Activated CD4-positive, alpha-beta memory T cell treated with anti-CD3 and anti-CD28 coated beads for 36 hours (primary cell): ENCODE measurements at regions of chr5 and their contacts with region 1.

Region 1: DNA sequence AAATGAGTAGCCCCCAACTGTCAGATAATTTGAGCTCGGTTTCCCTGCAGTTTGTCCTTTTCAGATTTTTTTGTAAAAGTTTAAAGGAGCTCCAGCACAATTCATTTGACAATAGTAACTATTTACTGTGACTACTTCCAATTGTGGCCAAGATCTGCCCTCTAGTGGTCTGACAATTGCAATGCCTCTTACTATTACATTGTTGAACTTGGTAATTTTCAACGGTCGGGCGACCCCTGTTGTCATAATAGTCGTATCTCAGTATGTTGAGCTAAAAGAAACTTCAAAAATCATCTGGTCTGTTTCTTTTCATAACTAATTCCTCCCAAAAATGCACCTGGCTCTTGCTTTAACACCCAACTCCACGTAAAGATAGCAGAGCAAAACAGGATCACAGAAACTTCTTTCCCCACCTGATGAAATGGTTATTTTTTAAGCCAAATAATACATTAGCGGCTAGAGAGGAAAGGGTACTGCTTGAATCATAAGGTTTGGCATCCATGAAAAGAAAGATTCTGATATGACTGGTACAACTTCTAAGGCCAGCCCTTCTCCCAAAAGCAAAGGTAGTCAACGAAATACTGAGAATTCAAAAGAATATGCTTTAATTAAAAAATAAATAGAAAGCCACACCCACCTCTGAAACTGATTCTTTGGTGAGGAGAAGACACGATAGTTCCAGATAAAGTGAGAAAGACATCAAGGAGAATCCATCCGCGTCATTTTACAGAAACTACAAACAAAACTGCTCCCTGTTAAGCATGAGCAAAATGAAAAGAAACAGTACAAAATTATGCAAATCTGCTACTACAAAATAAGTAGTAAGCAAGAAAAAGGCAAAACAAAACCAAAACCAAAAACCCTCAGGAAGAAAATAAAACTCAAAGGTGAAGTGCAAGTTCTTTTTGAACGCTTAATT is 76.9 kb upstream of the HTR4 start:
- DNase-seq: peak; percentile 73
- H3K4me3 Mint-ChIP-seq: peak overlapping the region; percentile 47
- H3K27ac Mint-ChIP-seq: no peak overlapping the region
- H3K4me1 Mint-ChIP-seq: peaks cover 12% of the 10 kb centered on the region
- H3K27me3 Mint-ChIP-seq: peaks cover 1% of the 10 kb centered on the region

Region 2: GRCh38 chr5:147782110-147783028 is 948.8 kb before region 1 on chr5 and contains the start of gene JAKMIP2:
- CTCF ChIA-PET with region 1: no interaction called
- POLR2A ChIA-PET with region 1: no interaction called
- intact Hi-C with region 1: no loop called
- DNase-seq: peak; percentile 69
- H3K4me3 Mint-ChIP-seq: peak within 1 kb of the TSS; percentile 70
- H3K27ac Mint-ChIP-seq: no peak within 1 kb of the TSS
- H3K4me1 Mint-ChIP-seq: peaks cover 2% of the 10 kb centered on the region
- H3K27me3 Mint-ChIP-seq: peaks cover 3% of the 10 kb centered on the region
- total RNA-seq, gene JAKMIP2: 0.99 to 1.1 TPM

Region 3: GRCh38 chr5:148042881-148043280 is 688.3 kb before region 1 on chr5:
- CTCF ChIA-PET with region 1: no interaction called
- POLR2A ChIA-PET with region 1: no interaction called
- intact Hi-C with region 1: no loop called
- DNase-seq: no peak
- H3K4me3 Mint-ChIP-seq: no peak overlapping the region
- H3K27ac Mint-ChIP-seq: no peak overlapping the region
- H3K4me1 Mint-ChIP-seq: no peaks in the 10 kb centered on the region
- H3K27me3 Mint-ChIP-seq: no peaks in the 10 kb centered on the region

Region 4: GRCh38 chr5:148186248-148186996 is 544.8 kb before region 1 on chr5:
- CTCF ChIA-PET with region 1: interaction called, 14 read pairs
- POLR2A ChIA-PET with region 1: no interaction called
- intact Hi-C with region 1: no loop called
- DNase-seq: no peak
- H3K4me3 Mint-ChIP-seq: no peak overlapping the region
- H3K27ac Mint-ChIP-seq: no peak overlapping the region
- H3K4me1 Mint-ChIP-seq: peaks cover 9% of the 10 kb centered on the region
- H3K27me3 Mint-ChIP-seq: peaks cover 8% of the 10 kb centered on the region

Region 5: GRCh38 chr5:148455185-148455584 is 276.0 kb before region 1 on chr5:
- CTCF ChIA-PET with region 1: interaction called, 17 read pairs
- POLR2A ChIA-PET with region 1: no interaction called
- intact Hi-C with region 1: no loop called
- DNase-seq: no peak
- H3K4me3 Mint-ChIP-seq: no peak overlapping the region
- H3K27ac Mint-ChIP-seq: no peak overlapping the region
- H3K4me1 Mint-ChIP-seq: no peaks in the 10 kb centered on the region
- H3K27me3 Mint-ChIP-seq: peaks cover 20% of the 10 kb centered on the region

Region 6: DNA sequence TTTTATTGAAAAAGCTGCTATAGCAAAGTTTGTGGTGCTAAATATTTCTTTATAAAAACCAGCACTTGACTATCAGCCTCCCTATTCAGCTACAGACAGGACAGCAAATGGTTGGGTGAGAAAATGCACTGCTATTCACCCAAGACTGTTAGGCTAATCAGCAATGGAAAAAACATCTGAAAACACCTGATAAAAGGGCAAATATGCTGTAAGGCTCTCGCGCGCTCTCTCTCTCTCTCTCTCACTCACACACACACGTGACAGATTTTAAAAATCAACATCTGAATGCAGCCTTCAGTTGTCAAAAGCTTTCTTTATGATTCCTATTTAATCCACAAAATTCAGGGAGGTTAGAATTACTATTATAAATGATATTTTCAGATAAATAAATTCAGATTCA is 157.0 kb before region 1 on chr5:
- CTCF ChIA-PET with region 1: no interaction called
- POLR2A ChIA-PET with region 1: no interaction called
- intact Hi-C with region 1: no loop called
- DNase-seq: no peak
- H3K4me3 Mint-ChIP-seq: no peak overlapping the region
- H3K27ac Mint-ChIP-seq: no peak overlapping the region
- H3K4me1 Mint-ChIP-seq: no peaks in the 10 kb centered on the region
- H3K27me3 Mint-ChIP-seq: peaks cover 3% of the 10 kb centered on the region

Region 7: GRCh38 chr5:148708854-148709253 is 22.3 kb before region 1 on chr5:
- CTCF ChIA-PET with region 1: interaction called, 27 read pairs
- POLR2A ChIA-PET with region 1: no interaction called
- intact Hi-C with region 1: no loop called
- DNase-seq: peak; percentile 48
- H3K4me3 Mint-ChIP-seq: no peak overlapping the region
- H3K27ac Mint-ChIP-seq: no peak overlapping the region
- H3K4me1 Mint-ChIP-seq: peaks cover 15% of the 10 kb centered on the region
- H3K27me3 Mint-ChIP-seq: peaks cover 25% of the 10 kb centered on the region

Region 8: GRCh38 chr5:148957591-148958202 is 226.5 kb after region 1 on chr5:
- CTCF ChIA-PET with region 1: interaction called, 310 read pairs
- POLR2A ChIA-PET with region 1: no interaction called
- intact Hi-C with region 1: loop called (anchors 1 kb)
- DNase-seq: peak; percentile 60
- H3K4me3 Mint-ChIP-seq: no peak overlapping the region
- H3K27ac Mint-ChIP-seq: no peak overlapping the region
- H3K4me1 Mint-ChIP-seq: no peaks in the 10 kb centered on the region
- H3K27me3 Mint-ChIP-seq: peaks cover 2% of the 10 kb centered on the region

Region 9: GRCh38 chr5:149114403-149115312 is 383.5 kb after region 1 on chr5:
- CTCF ChIA-PET with region 1: interaction called, 105 read pairs
- POLR2A ChIA-PET with region 1: no interaction called
- intact Hi-C with region 1: loop called (anchors 1 kb)
- DNase-seq: peak; percentile 56
- H3K4me3 Mint-ChIP-seq: no peak overlapping the region
- H3K27ac Mint-ChIP-seq: no peak overlapping the region
- H3K4me1 Mint-ChIP-seq: no peaks in the 10 kb centered on the region
- H3K27me3 Mint-ChIP-seq: peaks cover 17% of the 10 kb centered on the region

Region 10: DNA sequence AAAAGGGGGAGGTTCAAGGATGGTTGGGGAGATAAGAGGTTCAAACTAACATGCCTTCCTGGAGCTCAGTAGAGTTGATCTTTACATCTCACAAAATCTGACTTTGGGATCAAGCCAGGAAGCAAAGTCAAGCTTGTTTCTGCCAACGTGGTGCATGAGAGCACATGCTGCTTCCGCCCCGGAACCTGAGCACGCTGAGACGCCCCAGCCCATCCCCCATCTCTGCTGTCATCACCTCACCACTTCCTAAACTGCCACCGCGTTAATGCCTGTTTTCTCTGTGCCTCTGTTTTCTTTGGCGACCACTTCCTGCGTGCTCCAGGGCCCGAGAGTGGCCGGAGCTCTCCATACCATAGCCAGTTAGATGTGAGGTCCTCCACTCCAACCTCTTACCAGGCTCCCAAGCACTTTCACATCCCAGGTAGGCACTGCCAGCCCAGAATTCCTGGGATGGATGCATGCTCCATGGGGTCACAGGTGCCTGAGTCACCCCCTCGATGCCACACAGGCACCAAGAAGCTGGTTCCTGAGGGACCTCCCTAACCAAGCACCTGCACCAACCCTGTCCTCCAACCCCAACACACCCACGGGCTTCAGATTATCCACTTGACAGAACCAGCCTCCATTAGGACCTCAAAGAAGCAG is 509.3 kb after region 1 on chr5:
- CTCF ChIA-PET with region 1: no interaction called
- POLR2A ChIA-PET with region 1: no interaction called
- intact Hi-C with region 1: no loop called
- DNase-seq: peak; percentile 91
- H3K4me3 Mint-ChIP-seq: peak overlapping the region; percentile 31
- H3K27ac Mint-ChIP-seq: peak overlapping the region; percentile 86
- H3K4me1 Mint-ChIP-seq: peaks cover 38% of the 10 kb centered on the region
- H3K27me3 Mint-ChIP-seq: no peaks in the 10 kb centered on the region